ENCODE measurements at regions of chr11 and their contacts with region 1.

Region 1: GRCh38 chr11:113806406-113806805 is 26.8 kb downstream of the CLDN25 start:
- DNase-seq: no peak
- ATAC-seq: peak; percentile 83
- H3K4me3 ChIP-seq: no peak overlapping the region
- H3K27ac ChIP-seq: no peak overlapping the region
- H3K4me1 ChIP-seq: no peaks in the 10 kb centered on the region
- H3K27me3 ChIP-seq: no peaks in the 10 kb centered on the region
- CTCF ChIP-seq: peak; percentile 51 to 67 (median 55)
- EP300 ChIP-seq: no peak
- POLR2A ChIP-seq: no peak
- RAD21 ChIP-seq: peak; percentile 53

Region 2: DNA sequence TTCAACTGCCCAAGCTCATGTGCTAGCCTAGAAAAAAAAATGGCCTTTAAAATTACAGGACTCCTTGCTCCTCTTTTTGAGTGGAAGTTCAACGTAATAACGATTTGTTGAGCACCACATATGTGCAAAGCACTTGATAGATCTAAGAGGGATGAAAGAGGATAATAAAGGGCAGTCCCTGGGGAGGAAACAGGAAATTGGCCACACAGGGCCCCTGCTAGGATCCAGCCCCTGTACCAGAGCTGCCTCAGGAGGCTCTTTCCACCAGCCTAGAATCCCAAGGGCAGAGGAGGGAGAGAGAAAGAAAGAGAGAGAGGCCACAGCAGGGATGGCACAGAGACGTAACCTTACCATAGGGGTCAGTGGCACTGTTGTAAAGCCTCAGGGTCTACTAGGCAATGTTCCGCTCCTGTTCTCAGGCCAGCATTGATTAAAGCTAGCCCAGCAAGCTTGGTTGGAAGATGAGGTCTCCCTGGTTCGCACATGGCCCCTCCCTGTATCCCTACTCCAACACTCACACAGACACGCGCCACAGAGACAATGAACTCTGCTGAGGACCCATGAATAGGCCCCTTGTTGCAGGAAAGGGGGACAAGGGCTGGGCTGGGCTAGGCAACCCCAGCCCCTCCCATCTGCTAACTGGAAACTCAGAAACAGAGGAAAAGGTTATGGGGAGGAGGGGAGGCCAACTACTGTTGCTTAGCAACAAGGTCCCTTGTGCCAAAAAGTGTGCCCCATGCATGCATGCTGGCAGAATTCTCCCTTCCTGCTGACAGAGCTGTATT is 100.3 kb before region 1 on chr11 and contains the start of gene TMPRSS5:
- CTCF ChIA-PET with region 1: no interaction called
- POLR2A ChIA-PET with region 1: no interaction called
- RAD21 ChIA-PET with region 1: no interaction called
- SMC1A ChIA-PET with region 1: no interaction called
- in situ Hi-C with region 1: no loop called
- intact Hi-C with region 1: no loop called
- DNase-seq: no peak
- ATAC-seq: no peak
- H3K4me3 ChIP-seq: no peak within 1 kb of the TSS
- H3K27ac ChIP-seq: no peak within 1 kb of the TSS
- H3K4me1 ChIP-seq: no peaks in the 10 kb centered on the region
- H3K27me3 ChIP-seq: no peaks in the 10 kb centered on the region
- CTCF ChIP-seq: no peak
- EP300 ChIP-seq: no peak
- POLR2A ChIP-seq: no peak
- RAD21 ChIP-seq: no peak
- polyA plus RNA-seq, gene TMPRSS5: 0.05 TPM in 1 of 2 experiments, not detected in the other

Region 3: DNA sequence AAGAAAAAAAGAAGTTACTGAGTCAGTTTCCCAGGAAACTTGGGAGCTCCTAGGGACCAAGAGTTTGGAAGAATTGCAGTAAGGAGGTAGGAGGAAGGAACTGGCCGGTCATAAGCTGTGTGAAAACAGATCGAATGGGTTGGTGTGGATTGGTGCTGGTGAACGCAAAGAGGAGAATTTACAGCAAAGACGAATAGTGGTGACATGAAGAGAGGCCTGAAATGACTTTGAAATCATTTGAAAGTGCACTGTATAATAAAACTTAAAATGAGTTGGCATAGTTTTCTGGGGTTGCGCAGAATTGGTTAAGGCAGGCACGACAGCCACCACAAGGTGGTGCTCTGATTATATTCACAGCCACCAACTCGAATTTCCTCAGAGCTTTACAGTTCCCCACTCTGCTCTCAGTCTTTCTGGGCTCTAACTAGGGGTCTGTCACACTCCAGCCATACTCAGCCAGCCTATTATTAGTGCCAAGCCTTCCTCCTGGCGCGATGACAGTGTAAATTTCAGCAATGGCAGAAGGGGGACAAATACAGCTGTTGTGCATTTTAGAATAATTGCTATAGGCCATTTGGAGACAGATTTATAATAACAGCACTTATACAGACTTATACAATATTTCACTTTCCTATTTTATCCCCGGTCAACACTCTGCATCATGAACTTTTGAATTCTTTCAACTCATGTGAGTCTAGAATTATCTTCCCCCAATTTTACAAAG is 89.9 kb after region 1 on chr11:
- CTCF ChIA-PET with region 1: interaction called, 17 read pairs
- POLR2A ChIA-PET with region 1: no interaction called
- RAD21 ChIA-PET with region 1: interaction called, 3 read pairs
- SMC1A ChIA-PET with region 1: interaction called, 12 read pairs
- in situ Hi-C with region 1: no loop called
- intact Hi-C with region 1: no loop called
- DNase-seq: no peak
- ATAC-seq: peak; percentile 91
- H3K4me3 ChIP-seq: no peak overlapping the region
- H3K27ac ChIP-seq: no peak overlapping the region
- H3K4me1 ChIP-seq: peaks cover 10% of the 10 kb centered on the region
- H3K27me3 ChIP-seq: peaks cover 0 to 2% of the 10 kb centered on the region in 2 experiments; a peak in 1 of 4 replicates
- CTCF ChIP-seq: peak; percentile 72 to 79 (median 76)
- EP300 ChIP-seq: no peak
- POLR2A ChIP-seq: no peak
- RAD21 ChIP-seq: peak; percentile 59